Heart right ventricle (tissue), 16 donors: ENCODE measurements at regions of chr5 and their contacts with region 1.

Region 1: DNA sequence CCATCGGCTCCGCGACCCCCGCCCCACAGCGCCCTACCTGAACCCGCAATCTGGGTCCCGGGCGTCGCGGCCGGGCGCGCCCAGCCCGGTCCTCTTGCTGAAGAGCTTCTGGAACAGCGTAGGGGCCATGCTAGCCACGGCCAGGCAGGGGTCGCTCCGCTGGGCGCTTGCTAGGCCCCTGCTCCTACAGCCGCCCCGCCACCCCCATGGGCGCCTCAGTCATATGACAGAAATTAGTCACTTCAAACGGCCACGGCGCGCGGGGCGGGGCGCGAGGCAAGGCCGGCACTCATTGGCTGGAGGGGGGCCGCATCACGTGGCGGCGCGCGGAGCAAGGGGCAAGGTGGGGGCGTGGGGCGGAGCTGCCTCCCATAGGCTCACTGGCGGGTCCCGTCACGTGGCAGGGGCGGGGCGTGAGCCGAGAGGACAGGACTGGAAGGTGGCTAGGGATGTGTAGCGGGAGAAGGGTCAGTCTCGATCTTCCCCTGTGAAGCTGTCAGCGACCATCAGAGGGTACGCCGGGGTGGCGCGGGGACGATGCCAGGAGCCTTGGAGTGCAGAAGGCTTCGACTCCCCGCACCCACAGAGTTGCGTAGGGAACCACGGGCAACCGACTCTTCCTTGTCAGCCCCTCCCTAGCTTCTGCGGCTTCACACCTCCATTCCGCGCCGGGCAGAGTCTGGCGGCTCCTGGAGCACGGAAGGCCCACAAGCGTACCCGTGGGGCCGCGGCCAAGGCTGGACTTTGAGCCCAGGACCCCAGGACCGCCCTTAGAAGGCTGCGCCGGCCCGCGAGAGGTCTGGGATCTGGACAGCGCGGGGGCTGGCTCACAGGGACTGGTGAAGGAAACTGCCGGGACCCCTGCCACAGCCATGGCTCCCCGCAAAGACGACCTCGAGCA is at the start of gene FNIP1:
- DNase-seq: peak; percentile 99 to 100
- ATAC-seq: peak; percentile 98 to 99 (median 99)
- H3K4me3 ChIP-seq: peak within 1 kb of the TSS; percentile 89 to 100 (median 99)
- H3K27ac ChIP-seq: peak within 1 kb of the TSS; percentile 97 to 100 (median 99)
- H3K4me1 ChIP-seq: peaks cover 0 to 46% (median 36%) of the 10 kb centered on the region in 9 donors
- H3K27me3 ChIP-seq: no peaks in the 10 kb centered on the region
- CTCF ChIP-seq: peak in 3 of 9 donors; percentile 18 to 37 (median 23)
- total RNA-seq, gene FNIP1: 24.2 to 41.7 (median 34.1) TPM

Region 2: GRCh38 chr5:131589510-131590348 is 207.3 kb before region 1 on chr5:
- intact Hi-C with region 1: loop called in 2 of 10 experiments (anchors 10 kb)
- DNase-seq: no peak
- ATAC-seq: peak in 6 of 8 donors; percentile 29 to 79 (median 65)
- H3K4me3 ChIP-seq: no peak overlapping the region
- H3K27ac ChIP-seq: no peak overlapping the region
- H3K4me1 ChIP-seq: peaks cover 0 to 24% (median 20%) of the 10 kb centered on the region in 9 donors
- H3K27me3 ChIP-seq: no peaks in the 10 kb centered on the region
- CTCF ChIP-seq: peak; percentile 77 to 95 (median 87)

Region 3: DNA sequence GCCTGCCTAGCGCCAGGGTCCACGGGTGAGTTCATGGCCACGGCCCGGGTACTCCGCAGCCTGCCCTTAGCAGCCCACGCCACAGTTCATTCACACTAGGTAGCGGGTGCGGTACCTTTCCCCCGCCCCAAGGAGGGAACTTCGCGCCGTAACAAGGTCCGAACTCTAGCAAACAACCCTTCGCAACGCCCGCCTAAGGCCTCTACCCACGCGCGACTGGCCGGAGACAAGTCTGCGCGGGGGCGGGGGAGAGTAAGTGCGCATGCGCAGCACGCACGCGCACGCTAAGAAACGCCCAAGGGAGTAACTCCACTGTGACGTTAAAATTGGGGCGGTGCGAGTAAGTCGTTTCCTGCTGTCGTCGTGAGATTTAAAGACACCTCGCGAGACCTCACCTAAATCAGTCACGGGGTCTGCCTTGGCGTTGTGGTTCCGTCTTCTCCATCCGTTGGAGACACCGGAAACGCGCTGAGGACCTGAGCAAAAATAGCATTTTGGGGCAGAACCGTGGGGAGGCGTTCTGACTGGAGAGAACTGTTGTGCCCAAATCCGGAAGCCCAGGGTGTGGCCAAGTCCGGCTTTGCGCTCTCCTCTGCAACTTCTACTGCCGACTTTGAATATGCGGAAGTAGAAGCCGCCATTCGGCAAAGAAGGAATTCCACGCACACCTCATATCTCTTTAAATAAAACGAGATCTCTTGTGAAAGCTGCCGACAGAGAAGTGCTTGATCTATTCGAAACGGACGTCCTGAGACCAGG is 161.9 kb before region 1 on chr5 and contains the start of gene RAPGEF6:
- intact Hi-C with region 1: loop called in 6 of 10 experiments (anchors 1 to 10 kb)
- DNase-seq: peak; percentile 93 to 99
- ATAC-seq: peak; percentile 96 to 98 (median 98)
- H3K4me3 ChIP-seq: peak within 1 kb of the TSS; percentile 64 to 91 (median 75)
- H3K27ac ChIP-seq: peak within 1 kb of the TSS; percentile 94 to 100 (median 98)
- H3K4me1 ChIP-seq: peaks cover 4 to 53% (median 39%) of the 10 kb centered on the region in 9 donors
- H3K27me3 ChIP-seq: no peaks in the 10 kb centered on the region
- CTCF ChIP-seq: peak in 2 of 9 donors; percentile 2 to 4
- total RNA-seq, gene RAPGEF6: 8.5 to 16.3 (median 11.7) TPM

Region 4: GRCh38 chr5:131671994-131672655 is 124.9 kb before region 1 on chr5:
- intact Hi-C with region 1: loop called in 2 of 10 experiments (anchors 10 kb)
- DNase-seq: peak in 1 of 2 donors; percentile 36
- ATAC-seq: peak; percentile 80 to 95 (median 92)
- H3K4me3 ChIP-seq: no peak overlapping the region
- H3K27ac ChIP-seq: peak overlapping the region; percentile 52 to 85 (median 72)
- H3K4me1 ChIP-seq: peaks cover 4 to 47% (median 36%) of the 10 kb centered on the region in 9 donors
- H3K27me3 ChIP-seq: no peaks in the 10 kb centered on the region
- CTCF ChIP-seq: no peak

Region 5: GRCh38 chr5:131706281-131706680 is 90.8 kb before region 1 on chr5:
- intact Hi-C with region 1: loop called in 1 of 10 experiments (anchors 10 kb)
- DNase-seq: no peak
- ATAC-seq: no peak
- H3K4me3 ChIP-seq: no peak overlapping the region
- H3K27ac ChIP-seq: peak overlapping the region in 1 of 10 donors; percentile 72
- H3K4me1 ChIP-seq: peaks cover 0 to 8% (median 0%) of the 10 kb centered on the region in 9 donors
- H3K27me3 ChIP-seq: no peaks in the 10 kb centered on the region
- CTCF ChIP-seq: no peak

Region 6: GRCh38 chr5:131968396-131968954 is 171.4 kb after region 1 on chr5:
- intact Hi-C with region 1: no loop called
- DNase-seq: no peak
- ATAC-seq: no peak
- H3K4me3 ChIP-seq: no peak overlapping the region
- H3K27ac ChIP-seq: no peak overlapping the region
- H3K4me1 ChIP-seq: no peaks in the 10 kb centered on the region
- H3K27me3 ChIP-seq: no peaks in the 10 kb centered on the region
- CTCF ChIP-seq: no peak